OCI-LY7 (cell line): ENCODE measurements at regions of chr5 and their contacts with region 1.

Region 1: GRCh38 chr5:80255732-80256479 is at the start of gene SERINC5:
- DNase-seq: peak; percentile 89
- H3K4me3 ChIP-seq: peak within 1 kb of the TSS; percentile 88
- H3K27ac ChIP-seq: peak within 1 kb of the TSS; percentile 72
- H3K4me1 ChIP-seq: peaks cover 40% of the 10 kb centered on the region
- CTCF ChIP-seq: no peak
- total RNA-seq, gene SERINC5: 21.6 and 31.2 TPM in 2 replicates

Region 2: DNA sequence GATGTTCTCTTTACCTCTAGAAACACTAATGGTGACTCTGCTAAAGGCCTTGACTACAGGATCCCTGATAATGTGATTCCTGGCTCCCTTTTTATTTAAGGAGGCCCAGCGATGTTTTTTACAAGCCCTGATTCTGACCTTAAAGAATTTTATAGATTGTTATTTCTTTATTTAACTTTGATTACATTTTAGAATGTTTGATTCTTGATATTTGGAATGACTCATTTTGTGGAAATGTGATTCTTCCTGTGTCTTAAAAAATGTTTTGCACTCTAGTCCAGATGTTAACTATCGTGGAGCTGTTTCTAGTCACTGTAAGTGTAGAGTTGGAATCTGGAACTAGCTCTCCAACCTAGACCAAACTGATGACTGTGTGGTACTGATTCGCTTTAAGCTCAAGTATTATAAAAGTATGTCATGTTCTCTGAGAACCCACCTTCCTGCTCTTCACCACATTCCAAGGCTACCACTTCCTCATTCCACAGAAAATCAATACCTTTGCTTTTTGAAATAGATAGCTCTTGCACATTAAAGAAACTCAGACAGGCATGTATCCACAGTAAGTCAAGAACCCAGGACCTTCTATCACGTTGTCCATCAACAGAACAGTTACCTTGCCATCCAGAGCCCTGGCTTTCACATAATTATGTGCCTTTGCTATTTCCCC is 954.7 kb before region 1 on chr5:
- CTCF ChIA-PET with region 1: no interaction called
- POLR2A ChIA-PET with region 1: no interaction called
- intact Hi-C with region 1: no loop called
- DNase-seq: no peak
- H3K4me3 ChIP-seq: no peak overlapping the region
- H3K27ac ChIP-seq: no peak overlapping the region
- H3K4me1 ChIP-seq: no peaks in the 10 kb centered on the region
- CTCF ChIP-seq: no peak

Region 3: GRCh38 chr5:79982136-79982535 is 273.8 kb before region 1 on chr5:
- CTCF ChIA-PET with region 1: no interaction called
- POLR2A ChIA-PET with region 1: interaction called, 3 read pairs
- intact Hi-C with region 1: loop called (anchors 10 kb)
- DNase-seq: peak; percentile 50
- H3K4me3 ChIP-seq: peak overlapping the region; percentile 13
- H3K27ac ChIP-seq: peak overlapping the region; percentile 97
- H3K4me1 ChIP-seq: peaks cover 83% of the 10 kb centered on the region
- CTCF ChIP-seq: no peak

Region 4: GRCh38 chr5:80048084-80048780 is 207.7 kb before region 1 on chr5:
- CTCF ChIA-PET with region 1: no interaction called
- POLR2A ChIA-PET with region 1: no interaction called
- intact Hi-C with region 1: no loop called
- DNase-seq: no peak
- H3K4me3 ChIP-seq: no peak overlapping the region
- H3K27ac ChIP-seq: no peak overlapping the region
- H3K4me1 ChIP-seq: no peaks in the 10 kb centered on the region
- CTCF ChIP-seq: no peak

Region 5: GRCh38 chr5:80181618-80182211 is 74.2 kb before region 1 on chr5:
- CTCF ChIA-PET with region 1: no interaction called
- POLR2A ChIA-PET with region 1: interaction called, 62 read pairs
- intact Hi-C with region 1: loop called (anchors 1 kb)
- DNase-seq: peak; percentile 95
- H3K4me3 ChIP-seq: peak overlapping the region; percentile 42
- H3K27ac ChIP-seq: peak overlapping the region; percentile 98
- H3K4me1 ChIP-seq: peaks cover 88% of the 10 kb centered on the region
- CTCF ChIP-seq: no peak

Region 6: GRCh38 chr5:80216753-80217596 is 38.9 kb before region 1 on chr5:
- CTCF ChIA-PET with region 1: interaction called, 10 read pairs
- POLR2A ChIA-PET with region 1: interaction called, 4 read pairs
- intact Hi-C with region 1: no loop called
- DNase-seq: no peak
- H3K4me3 ChIP-seq: no peak overlapping the region
- H3K27ac ChIP-seq: no peak overlapping the region
- H3K4me1 ChIP-seq: peaks cover 47% of the 10 kb centered on the region
- CTCF ChIP-seq: no peak

Region 7: GRCh38 chr5:80268916-80269315 is 13.0 kb after region 1 on chr5:
- CTCF ChIA-PET with region 1: interaction called, 3 read pairs
- POLR2A ChIA-PET with region 1: interaction called, 15 read pairs
- intact Hi-C with region 1: no loop called
- DNase-seq: no peak
- H3K4me3 ChIP-seq: no peak overlapping the region
- H3K27ac ChIP-seq: no peak overlapping the region
- H3K4me1 ChIP-seq: peaks cover 21% of the 10 kb centered on the region
- CTCF ChIP-seq: no peak